Activated B cell treated with CpG ODN at 0.5 μM for 24 hours (primary cell): ENCODE measurements at regions of chr5 and their contacts with region 1.

Region 1: GRCh38 chr5:173972925-173973615 is 15.9 kb upstream of the C5orf47 start:
- DNase-seq: peak; percentile 65
- ATAC-seq: peak; percentile 90
- H3K4me3 Mint-ChIP-seq: peak overlapping the region; percentile 78
- H3K27ac Mint-ChIP-seq: no peak overlapping the region
- H3K4me1 Mint-ChIP-seq: peaks cover 10% of the 10 kb centered on the region
- H3K27me3 Mint-ChIP-seq: peaks cover 25% of the 10 kb centered on the region
- CTCF ChIP-seq: peak; percentile 55

Region 2: GRCh38 chr5:173293817-173294672 is 679.0 kb before region 1 on chr5:
- CTCF ChIA-PET with region 1: interaction called, 5 read pairs
- POLR2A ChIA-PET with region 1: no interaction called
- intact Hi-C with region 1: loop called (anchors 1 kb)
- DNase-seq: peak; percentile 53
- ATAC-seq: peak; percentile 69
- H3K4me3 Mint-ChIP-seq: no peak overlapping the region
- H3K27ac Mint-ChIP-seq: no peak overlapping the region
- H3K4me1 Mint-ChIP-seq: peaks cover 11% of the 10 kb centered on the region
- H3K27me3 Mint-ChIP-seq: peaks cover 41% of the 10 kb centered on the region
- CTCF ChIP-seq: no peak

Region 3: DNA sequence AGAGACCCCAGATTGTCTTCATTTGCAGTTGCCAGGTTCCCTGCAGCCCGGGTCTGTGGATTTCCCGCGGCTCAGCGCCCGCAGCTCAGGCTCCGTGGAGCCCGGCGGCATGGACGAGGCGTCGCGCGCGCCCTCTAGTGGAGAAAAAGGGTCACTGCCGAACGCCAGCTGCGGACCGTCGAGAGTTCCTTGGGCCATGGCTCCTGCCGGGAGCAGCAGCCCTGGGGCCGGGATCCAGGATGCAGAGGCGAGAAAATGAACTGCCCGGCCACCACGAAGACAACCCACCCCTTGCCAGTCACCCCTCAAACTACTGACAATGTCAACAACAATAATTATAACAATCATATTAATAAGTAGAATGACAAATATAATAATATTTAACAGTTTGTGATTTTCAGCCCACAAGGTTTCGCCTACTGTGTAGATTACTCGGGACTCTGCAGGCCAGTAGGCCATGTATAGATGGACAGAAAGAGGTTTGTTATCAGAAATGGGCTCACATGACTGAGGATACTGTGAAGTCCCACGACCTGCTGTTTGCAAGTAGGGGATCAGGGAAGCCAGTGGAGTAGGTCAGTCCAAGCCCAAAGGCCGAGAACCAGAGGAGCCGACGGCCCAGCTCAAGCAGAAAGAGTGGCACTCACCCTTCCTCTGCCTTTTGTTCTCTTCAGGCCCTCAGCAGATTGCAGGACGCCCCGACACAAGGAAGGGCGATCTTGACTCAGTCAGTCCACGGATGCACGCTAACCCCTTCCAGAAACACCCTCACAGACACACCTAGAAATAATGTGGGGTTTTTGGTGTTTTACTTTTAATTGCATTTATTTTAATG is 399.7 kb before region 1 on chr5:
- CTCF ChIA-PET with region 1: interaction called, 10 read pairs
- POLR2A ChIA-PET with region 1: no interaction called
- intact Hi-C with region 1: no loop called
- DNase-seq: peak; percentile 42
- ATAC-seq: peak; percentile 73
- H3K4me3 Mint-ChIP-seq: no peak overlapping the region
- H3K27ac Mint-ChIP-seq: no peak overlapping the region
- H3K4me1 Mint-ChIP-seq: peaks cover 7% of the 10 kb centered on the region
- H3K27me3 Mint-ChIP-seq: peaks cover 27% of the 10 kb centered on the region
- CTCF ChIP-seq: peak; percentile 97

Region 4: DNA sequence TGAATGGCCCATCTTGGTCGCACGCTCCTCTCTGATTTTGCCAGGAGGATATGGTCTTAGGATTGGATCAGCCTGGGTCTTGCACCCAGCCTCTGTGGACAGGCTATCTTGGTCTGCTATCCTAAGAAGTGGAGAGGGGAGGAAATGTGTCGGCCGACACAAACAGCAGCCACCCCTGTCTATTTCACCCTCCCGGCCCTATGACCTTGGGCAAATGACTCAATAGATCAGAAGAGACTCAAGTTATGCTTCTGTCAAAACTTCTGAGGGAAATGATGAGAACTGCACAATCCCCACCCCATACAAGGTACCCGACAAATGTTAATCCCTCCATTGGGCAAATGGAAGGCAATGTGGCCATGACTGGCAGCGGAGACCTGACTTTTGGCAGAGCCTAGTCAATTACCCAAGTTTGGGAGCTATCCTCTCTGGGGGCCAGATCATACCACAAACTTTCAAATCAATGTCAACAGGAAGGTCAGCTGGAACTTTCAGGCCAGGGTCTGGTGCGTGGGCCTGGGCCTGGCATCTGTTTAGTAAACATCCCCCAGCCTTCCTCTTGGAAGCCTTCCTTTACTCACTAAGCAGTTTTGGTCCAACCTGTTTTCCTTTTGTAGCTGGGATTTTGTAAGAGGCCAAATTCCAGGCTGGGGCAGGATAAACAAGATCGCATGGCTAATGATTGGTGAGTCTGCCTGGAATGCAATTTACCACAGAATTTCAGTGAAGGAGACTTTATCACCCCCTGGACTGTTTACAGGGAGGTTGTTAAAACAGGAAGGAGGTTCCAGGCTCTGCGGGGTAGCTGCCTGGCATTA is 149.2 kb before region 1 on chr5:
- CTCF ChIA-PET with region 1: no interaction called
- POLR2A ChIA-PET with region 1: no interaction called
- intact Hi-C with region 1: loop called (anchors 1 kb)
- DNase-seq: no peak
- ATAC-seq: no peak
- H3K4me3 Mint-ChIP-seq: no peak overlapping the region
- H3K27ac Mint-ChIP-seq: peak overlapping the region; percentile 42
- H3K4me1 Mint-ChIP-seq: peaks cover 86% of the 10 kb centered on the region
- H3K27me3 Mint-ChIP-seq: no peaks in the 10 kb centered on the region
- CTCF ChIP-seq: no peak

Region 5: DNA sequence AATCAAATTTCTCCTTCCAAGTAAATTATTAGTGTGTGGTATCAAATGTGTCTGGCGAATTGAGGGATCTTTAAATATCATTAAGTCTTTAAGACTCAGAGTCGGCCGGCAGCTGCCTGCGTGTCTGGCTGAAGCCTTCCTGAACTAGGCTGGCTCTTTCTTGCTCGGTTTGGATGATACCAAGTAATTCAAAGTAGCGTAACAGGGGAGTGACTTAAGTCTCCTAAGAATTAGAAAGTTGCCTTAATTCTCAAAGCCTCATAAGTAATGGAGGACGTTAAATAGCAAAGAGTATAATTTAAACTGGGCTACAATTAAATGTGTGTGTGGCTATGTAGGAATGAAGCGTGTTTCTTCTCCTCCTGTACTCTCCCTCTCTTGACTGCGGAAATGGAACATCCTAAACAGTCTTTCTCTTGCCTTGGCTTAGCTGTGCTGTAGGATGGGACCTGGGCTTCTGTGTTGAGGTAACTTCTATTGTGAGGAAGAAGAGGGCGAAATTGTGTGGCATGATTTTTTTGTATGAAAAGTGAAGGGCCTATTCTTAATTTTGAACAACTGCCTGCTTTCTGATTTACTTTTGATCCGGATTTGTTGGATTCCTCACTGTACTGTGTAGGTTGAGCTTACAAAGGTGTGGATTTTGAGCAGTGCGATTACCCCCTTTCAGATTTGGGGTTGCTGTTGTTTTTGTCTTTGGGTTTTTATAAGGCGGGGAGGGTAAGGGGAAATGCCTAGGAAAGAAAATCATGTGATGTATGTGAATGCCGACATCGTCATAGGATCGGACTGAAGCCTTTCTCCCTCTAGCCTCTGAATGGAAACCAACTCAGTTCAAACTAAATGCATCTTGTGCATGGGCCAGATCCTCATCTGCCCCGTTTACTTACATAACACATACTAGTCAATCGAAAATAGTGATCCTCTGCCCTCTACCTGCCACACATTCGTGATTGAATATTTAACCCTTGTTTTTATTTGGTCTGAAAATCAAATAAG is 55.0 kb before region 1 on chr5:
- CTCF ChIA-PET with region 1: no interaction called
- POLR2A ChIA-PET with region 1: interaction called, 4 read pairs
- intact Hi-C with region 1: loop called (anchors 2 kb)
- DNase-seq: no peak
- ATAC-seq: peak; percentile 92
- H3K4me3 Mint-ChIP-seq: no peak overlapping the region
- H3K27ac Mint-ChIP-seq: no peak overlapping the region
- H3K4me1 Mint-ChIP-seq: peaks cover 24% of the 10 kb centered on the region
- H3K27me3 Mint-ChIP-seq: no peaks in the 10 kb centered on the region
- CTCF ChIP-seq: no peak

Region 6: GRCh38 chr5:173925448-173926071 is 47.5 kb before region 1 on chr5:
- CTCF ChIA-PET with region 1: interaction called, 17 read pairs
- POLR2A ChIA-PET with region 1: no interaction called
- intact Hi-C with region 1: loop called (anchors 1 kb)
- DNase-seq: no peak
- ATAC-seq: peak; percentile 54
- H3K4me3 Mint-ChIP-seq: no peak overlapping the region
- H3K27ac Mint-ChIP-seq: no peak overlapping the region
- H3K4me1 Mint-ChIP-seq: peaks cover 25% of the 10 kb centered on the region
- H3K27me3 Mint-ChIP-seq: no peaks in the 10 kb centered on the region
- CTCF ChIP-seq: no peak

Region 7: GRCh38 chr5:174311531-174312269 is 338.6 kb after region 1 on chr5:
- CTCF ChIA-PET with region 1: interaction called, 6 read pairs
- POLR2A ChIA-PET with region 1: no interaction called
- intact Hi-C with region 1: loop called (anchors 5 kb)
- DNase-seq: peak; percentile 42
- ATAC-seq: peak; percentile 42
- H3K4me3 Mint-ChIP-seq: no peak overlapping the region
- H3K27ac Mint-ChIP-seq: no peak overlapping the region
- H3K4me1 Mint-ChIP-seq: peaks cover 2% of the 10 kb centered on the region
- H3K27me3 Mint-ChIP-seq: peaks cover 32% of the 10 kb centered on the region
- CTCF ChIP-seq: no peak